ENCODE measurements at regions of chr9 and their contacts with region 1.

Region 1: DNA sequence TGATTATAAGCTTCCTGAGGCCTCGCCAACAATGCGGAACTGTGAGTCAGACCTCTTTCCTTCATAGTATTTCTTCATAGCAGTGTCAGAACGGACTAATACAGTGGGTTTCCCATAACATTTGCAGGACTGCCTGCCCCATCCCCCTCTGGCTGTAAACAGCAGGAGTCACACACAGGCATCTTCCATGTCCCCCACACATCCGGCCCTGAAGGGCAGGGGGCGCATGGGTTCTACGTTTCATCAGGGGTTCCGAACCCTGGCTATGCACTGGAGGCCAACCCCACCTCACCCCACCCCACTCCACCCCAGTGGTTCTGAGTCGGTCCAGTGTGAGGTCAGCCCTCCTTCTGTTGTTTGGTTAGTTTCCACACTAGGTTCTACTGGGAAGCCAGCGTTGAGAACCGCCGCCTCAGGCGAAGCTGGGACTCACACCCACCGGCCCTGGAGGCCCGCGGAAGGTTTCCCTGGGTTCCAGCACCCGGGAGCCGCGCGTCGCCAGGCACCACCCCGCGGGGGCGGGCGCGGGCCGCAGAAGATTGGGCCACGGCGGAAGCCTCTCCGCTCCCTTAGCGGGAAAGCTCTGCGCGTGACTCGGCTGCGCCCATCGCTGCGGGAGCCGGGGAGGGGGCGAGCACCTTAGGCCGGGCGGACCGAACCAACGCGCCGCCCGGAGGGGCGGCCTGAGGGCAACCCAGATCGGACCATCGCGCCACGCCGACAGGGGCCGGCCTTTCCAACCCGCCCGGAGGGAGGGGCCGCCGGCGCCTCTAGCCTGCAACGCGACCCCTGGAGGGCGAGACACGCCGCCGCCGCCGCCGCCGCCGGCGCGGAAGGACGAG is at the start of gene RUSC2:
- DNase-seq: peak in 1 of 2 donors; percentile 95
- H3K4me3 ChIP-seq: peak within 1 kb of the TSS; percentile 89 to 92
- H3K27ac ChIP-seq: peak within 1 kb of the TSS; percentile 95
- H3K4me1 ChIP-seq: peaks cover 38% of the 10 kb centered on the region
- H3K27me3 ChIP-seq: no peaks in the 10 kb centered on the region
- CTCF ChIP-seq: peak in 2 of 3 experiments; percentile 24 to 41
- POLR2A ChIP-seq: peak in 1 of 2 donors; percentile 24
- total RNA-seq, gene RUSC2: 18.9 TPM

Region 2: DNA sequence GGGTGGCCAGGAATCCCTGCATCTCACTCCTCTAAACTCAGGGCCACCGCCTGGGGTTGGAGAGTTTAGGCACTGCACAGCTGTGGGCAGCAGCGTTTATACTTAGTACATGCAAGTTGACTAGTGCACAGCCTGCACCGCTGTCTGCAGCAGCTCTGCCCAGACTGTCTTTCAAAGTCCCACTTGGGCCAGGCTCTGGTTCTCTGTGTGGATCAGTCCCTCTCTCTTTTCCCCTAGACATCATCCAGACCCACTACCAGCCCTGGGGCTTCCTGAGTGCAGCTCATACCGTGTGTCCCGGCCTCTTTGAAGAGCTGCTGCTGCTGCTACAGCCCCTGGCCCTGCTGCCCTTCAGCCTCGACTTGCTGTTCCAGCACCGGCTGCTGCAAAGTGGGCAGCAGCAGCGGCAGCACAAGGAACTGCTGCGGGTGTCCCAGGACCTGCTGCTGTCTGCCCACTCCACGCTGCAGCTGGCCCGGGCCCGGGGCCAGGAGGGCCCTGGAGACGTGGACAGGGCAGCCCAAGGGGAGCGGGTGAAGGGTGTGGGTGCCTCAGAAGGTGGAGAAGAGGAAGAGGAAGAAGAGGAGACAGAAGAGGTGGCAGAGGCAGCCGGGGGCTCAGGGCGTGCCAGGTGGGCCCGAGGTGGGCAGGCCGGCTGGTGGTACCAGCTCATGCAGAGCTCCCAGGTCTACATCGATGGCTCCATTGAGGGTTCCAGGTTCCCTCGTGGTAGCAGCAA is 70.4 kb after region 1 on chr9:
- intact Hi-C with region 1: loop called (anchors 5 kb)
- DNase-seq: no peak
- H3K4me3 ChIP-seq: no peak overlapping the region
- H3K27ac ChIP-seq: no peak overlapping the region
- H3K4me1 ChIP-seq: peaks cover 19% of the 10 kb centered on the region
- H3K27me3 ChIP-seq: no peaks in the 10 kb centered on the region
- CTCF ChIP-seq: no peak
- POLR2A ChIP-seq: no peak

Region 3: GRCh38 chr9:35603987-35604577 is 114.5 kb after region 1 on chr9:
- intact Hi-C with region 1: loop called (anchors 5 kb)
- DNase-seq: peak; percentile 100
- H3K4me3 ChIP-seq: peak overlapping the region; percentile 64 to 88
- H3K27ac ChIP-seq: peak overlapping the region; percentile 95
- H3K4me1 ChIP-seq: peaks cover 24% of the 10 kb centered on the region
- H3K27me3 ChIP-seq: no peaks in the 10 kb centered on the region
- CTCF ChIP-seq: peak; percentile 83 to 97 (median 86)
- POLR2A ChIP-seq: peak in 1 of 2 donors; percentile 62